BJ (cell line): ENCODE measurements at regions of chr4 and their contacts with region 1.

Region 1: GRCh38 chr4:119238068-119238722 is 25.7 kb downstream of the USP53 start:
- DNase-seq: no peak
- H3K4me3 ChIP-seq: no peak overlapping the region
- H3K27me3 ChIP-seq: no peaks in the 10 kb centered on the region
- CTCF ChIP-seq: no peak

Region 2: DNA sequence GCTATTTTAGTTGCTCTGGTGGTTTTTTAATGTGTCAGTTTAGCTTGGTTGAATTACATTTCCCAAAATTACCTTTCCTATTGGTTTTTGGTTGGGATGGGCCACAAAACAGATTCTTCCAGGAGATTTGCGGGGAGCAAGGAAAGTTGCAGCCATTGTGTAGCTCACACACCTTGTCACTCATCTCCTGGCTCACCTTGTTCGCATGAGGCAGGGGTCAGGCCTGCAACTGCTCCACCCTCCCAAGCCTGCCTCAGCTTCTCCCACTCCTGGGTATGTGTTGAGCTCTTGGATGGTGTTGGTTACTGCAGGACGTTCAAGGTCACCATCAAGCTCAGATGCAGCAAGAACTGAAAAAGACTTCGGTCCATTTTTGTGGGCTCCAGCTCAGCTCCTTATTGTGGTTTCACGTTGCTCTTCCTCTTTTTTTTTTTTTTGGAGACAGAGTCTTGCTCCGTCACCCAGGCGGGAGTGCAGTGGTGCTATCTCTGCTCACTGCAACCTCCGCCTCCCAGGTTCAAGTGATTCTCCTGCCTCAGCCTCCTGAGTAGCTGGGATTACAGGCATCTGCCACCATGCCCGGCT is 648.6 kb before region 1 on chr4:
- CTCF ChIA-PET with region 1: no interaction called
- POLR2A ChIA-PET with region 1: interaction called, 11 read pairs
- DNase-seq: no peak
- H3K4me3 ChIP-seq: no peak overlapping the region
- H3K27me3 ChIP-seq: peaks cover 13% of the 10 kb centered on the region
- CTCF ChIP-seq: no peak